Activated CD4-positive, alpha-beta T cell treated with anti-CD3 and anti-CD28 coated beads for 36 hours (primary cell): ENCODE measurements at regions of chr6 and their contacts with region 1.

Region 1: DNA sequence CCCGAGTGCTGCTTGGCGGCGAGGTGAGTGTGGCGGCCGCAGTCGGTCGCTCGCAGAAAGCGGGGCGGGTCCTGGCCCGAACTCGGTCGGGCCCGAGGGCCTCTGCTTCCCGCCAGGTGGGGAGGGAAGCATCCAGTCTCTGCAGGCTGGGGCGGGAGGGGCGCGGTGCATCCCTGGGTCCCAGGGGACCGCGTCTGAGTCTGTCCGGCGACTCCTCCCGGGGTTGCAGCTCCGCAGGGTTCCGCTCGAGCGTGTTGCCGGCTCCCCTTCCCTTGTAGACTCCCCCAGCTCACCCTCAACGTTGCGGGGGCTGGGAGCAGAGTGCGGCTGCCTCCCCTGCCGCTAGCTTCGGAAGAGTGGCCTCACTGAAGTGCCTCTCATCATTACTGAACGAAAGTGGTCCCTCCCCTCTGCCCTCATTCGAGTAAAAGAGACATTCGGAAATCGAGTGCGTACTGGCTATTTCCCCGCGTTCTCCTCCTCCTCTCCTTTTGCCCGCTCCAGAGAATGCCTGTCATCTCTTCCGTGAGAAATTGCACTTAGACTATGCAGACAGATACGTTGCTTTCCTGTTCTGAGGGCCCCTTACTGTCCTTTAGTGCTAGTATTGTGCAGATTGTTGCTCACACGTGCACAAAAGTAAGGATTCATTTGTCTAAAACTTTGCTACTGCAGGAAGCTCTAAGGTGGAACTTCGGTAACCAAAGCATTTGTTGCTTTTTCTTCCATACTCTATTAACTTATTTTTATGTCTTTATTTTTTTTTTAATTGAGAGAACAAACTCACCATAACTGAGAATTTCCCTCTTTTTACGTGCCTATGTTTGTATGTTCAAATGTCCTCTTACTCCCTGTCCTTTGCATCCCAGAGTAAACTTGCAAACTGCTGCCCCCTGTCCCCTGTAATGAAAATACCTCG is 751 bp downstream of the MAP3K4 start:
- DNase-seq: peak; percentile 45
- ATAC-seq: peak; percentile 61
- H3K4me3 Mint-ChIP-seq: peak overlapping the region; percentile 93
- H3K27ac Mint-ChIP-seq: peak overlapping the region; percentile 83
- H3K4me1 Mint-ChIP-seq: peaks cover 37% of the 10 kb centered on the region
- H3K27me3 Mint-ChIP-seq: no peaks in the 10 kb centered on the region

Region 2: DNA sequence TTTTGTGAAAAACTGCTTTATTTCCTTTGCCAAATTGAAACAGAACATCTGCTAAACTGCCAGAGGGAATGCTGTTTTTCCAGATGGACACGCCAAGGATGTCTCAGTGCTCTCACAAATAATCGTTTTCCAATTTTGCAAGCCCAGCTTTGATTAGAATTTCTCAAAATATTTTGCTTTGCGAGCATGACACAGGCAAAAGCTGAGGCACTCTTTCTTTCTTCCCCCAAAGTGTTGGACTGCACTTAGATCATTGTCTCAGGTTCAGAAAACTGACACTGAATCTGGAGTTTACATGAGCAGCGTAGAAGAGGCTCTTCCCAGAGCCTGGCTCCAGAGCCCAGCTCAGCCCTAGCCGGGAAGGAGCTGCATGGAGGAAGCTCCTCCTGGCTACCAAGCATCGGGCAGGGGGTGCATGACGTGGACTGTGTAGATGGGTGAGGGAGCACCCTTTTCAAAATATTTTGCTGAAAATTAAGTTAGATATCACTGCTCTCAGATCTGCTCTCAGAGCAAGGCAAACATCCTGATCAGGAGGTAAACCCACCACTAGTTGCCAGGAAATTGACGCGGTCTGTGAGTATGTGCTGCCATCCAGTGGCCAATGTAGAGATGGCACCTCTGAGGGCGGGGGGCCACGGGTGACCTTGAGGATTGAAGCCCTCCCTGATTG is 536.6 kb before region 1 on chr6:
- CTCF ChIA-PET with region 1: no interaction called
- POLR2A ChIA-PET with region 1: no interaction called
- intact Hi-C with region 1: no loop called
- DNase-seq: peak; percentile 76
- ATAC-seq: peak; percentile 87
- H3K4me3 Mint-ChIP-seq: no peak overlapping the region
- H3K27ac Mint-ChIP-seq: no peak overlapping the region
- H3K4me1 Mint-ChIP-seq: peaks cover 25% of the 10 kb centered on the region
- H3K27me3 Mint-ChIP-seq: peaks cover 16% of the 10 kb centered on the region

Region 3: DNA sequence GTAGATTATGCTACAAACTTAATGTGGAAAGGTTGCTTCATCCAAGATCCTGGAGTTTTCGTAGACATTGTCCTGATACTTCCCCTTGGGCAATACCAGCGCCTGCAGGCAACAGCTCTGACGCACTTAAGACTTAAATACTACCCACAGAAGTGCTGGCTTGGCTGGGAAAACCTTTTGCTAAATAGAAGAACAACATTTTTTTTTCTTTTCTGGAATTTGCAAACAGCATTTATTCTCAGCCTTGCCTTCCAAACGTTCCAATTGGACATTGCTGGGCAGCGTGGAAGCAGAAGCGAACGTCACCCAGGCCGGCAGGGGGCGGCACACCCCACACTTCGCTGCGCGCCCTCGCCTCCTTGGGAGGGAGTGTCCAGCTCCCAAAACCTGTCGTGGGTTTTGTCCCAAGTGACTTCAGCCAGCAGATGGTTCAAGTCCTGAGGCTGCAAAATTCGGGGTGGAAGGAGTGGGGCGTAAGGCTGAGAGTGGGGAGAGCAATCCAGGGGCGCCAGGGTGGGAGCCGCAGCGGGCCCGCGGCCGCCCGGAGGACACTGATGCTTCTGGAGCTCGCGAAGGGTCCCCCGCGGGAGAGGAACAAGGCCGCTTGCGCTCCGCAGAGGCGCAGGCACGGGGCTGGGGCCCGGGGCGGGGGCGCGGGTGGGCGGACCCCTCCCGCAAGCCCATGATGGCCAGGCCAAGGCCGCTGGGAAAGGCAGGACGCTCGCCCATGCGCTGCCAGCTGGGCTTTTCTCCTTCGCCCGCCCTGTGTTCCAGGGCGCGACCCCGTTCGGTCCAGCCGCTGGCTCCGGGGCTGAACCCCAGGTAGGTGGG is 61.6 kb before region 1 on chr6:
- CTCF ChIA-PET with region 1: interaction called, 7 read pairs
- POLR2A ChIA-PET with region 1: no interaction called
- intact Hi-C with region 1: loop called (anchors 1 to 5 kb)
- DNase-seq: peak; percentile 77
- ATAC-seq: peak; percentile 81
- H3K4me3 Mint-ChIP-seq: peak overlapping the region; percentile 34
- H3K27ac Mint-ChIP-seq: no peak overlapping the region
- H3K4me1 Mint-ChIP-seq: peaks cover 2% of the 10 kb centered on the region
- H3K27me3 Mint-ChIP-seq: peaks cover 37% of the 10 kb centered on the region

Region 4: GRCh38 chr6:160950507-160950906 is 41.8 kb before region 1 on chr6:
- CTCF ChIA-PET with region 1: no interaction called
- POLR2A ChIA-PET with region 1: no interaction called
- intact Hi-C with region 1: no loop called
- DNase-seq: no peak
- ATAC-seq: no peak
- H3K4me3 Mint-ChIP-seq: no peak overlapping the region
- H3K27ac Mint-ChIP-seq: no peak overlapping the region
- H3K4me1 Mint-ChIP-seq: no peaks in the 10 kb centered on the region
- H3K27me3 Mint-ChIP-seq: peaks cover 29% of the 10 kb centered on the region

Region 5: GRCh38 chr6:161079566-161080262 is 87.4 kb after region 1 on chr6:
- CTCF ChIA-PET with region 1: no interaction called
- POLR2A ChIA-PET with region 1: no interaction called
- intact Hi-C with region 1: loop called (anchors 1 to 10 kb)
- DNase-seq: peak; percentile 84
- ATAC-seq: peak; percentile 91
- H3K4me3 Mint-ChIP-seq: peak overlapping the region; percentile 29
- H3K27ac Mint-ChIP-seq: no peak overlapping the region
- H3K4me1 Mint-ChIP-seq: peaks cover 6% of the 10 kb centered on the region
- H3K27me3 Mint-ChIP-seq: no peaks in the 10 kb centered on the region

Region 6: DNA sequence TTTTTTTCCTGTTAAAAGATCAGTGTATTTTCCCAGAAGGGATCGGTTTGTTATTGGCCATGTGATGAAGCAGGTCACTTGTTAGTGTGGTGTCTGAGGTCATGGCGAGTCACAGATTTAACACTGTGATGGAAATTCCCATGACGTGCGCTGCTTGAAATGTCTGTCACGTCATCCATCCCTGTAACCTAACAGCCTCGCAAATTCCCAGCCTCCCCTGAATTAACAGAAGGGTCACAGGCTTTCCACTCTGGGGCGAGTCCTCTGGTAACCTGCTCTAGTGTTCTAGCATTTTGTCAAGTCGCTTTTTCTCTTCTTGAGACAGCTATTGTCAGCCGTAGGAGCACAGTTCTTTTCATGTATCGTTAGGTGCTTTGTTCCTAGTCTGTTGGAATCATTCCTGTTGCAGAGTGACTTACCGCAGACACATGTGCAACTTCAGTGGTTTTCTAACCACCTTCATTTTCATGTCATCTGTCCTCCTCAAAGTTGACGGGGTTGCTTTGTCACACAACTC is 136.4 kb after region 1 on chr6:
- CTCF ChIA-PET with region 1: no interaction called
- POLR2A ChIA-PET with region 1: no interaction called
- intact Hi-C with region 1: loop called in 1 of 2 experiments (anchors 2 kb)
- DNase-seq: peak; percentile 76
- ATAC-seq: peak; percentile 77
- H3K4me3 Mint-ChIP-seq: peak overlapping the region; percentile 50
- H3K27ac Mint-ChIP-seq: peak overlapping the region; percentile 89
- H3K4me1 Mint-ChIP-seq: peaks cover 34% of the 10 kb centered on the region
- H3K27me3 Mint-ChIP-seq: no peaks in the 10 kb centered on the region

Region 7: GRCh38 chr6:161273752-161274487 is 281.6 kb after region 1 on chr6 and contains the start of gene AGPAT4:
- CTCF ChIA-PET with region 1: interaction called, 3 read pairs
- POLR2A ChIA-PET with region 1: interaction called, 3 read pairs
- intact Hi-C with region 1: loop called (anchors 1 to 5 kb)
- DNase-seq: peak; percentile 71
- ATAC-seq: peak; percentile 98
- H3K4me3 Mint-ChIP-seq: peak within 1 kb of the TSS; percentile 70
- H3K27ac Mint-ChIP-seq: peak within 1 kb of the TSS; percentile 86
- H3K4me1 Mint-ChIP-seq: peaks cover 23% of the 10 kb centered on the region
- H3K27me3 Mint-ChIP-seq: peaks cover 6% of the 10 kb centered on the region
- total RNA-seq, gene AGPAT4: 4.7 to 5.0 TPM

Region 8: GRCh38 chr6:162727309-162728182 is 1735.2 kb after region 1 on chr6 and contains the starts of genes PACRG and PRKN:
- CTCF ChIA-PET with region 1: no interaction called
- POLR2A ChIA-PET with region 1: no interaction called
- intact Hi-C with region 1: loop called in 1 of 2 experiments (anchors 1 kb)
- DNase-seq: peak; percentile 99
- ATAC-seq: peak; percentile 97
- H3K4me3 Mint-ChIP-seq: peak within 1 kb of the TSS; percentile 77
- H3K27ac Mint-ChIP-seq: peak within 1 kb of the TSS; percentile 84
- H3K4me1 Mint-ChIP-seq: peaks cover 11% of the 10 kb centered on the region
- H3K27me3 Mint-ChIP-seq: no peaks in the 10 kb centered on the region
- total RNA-seq, gene PACRG: not detected
- total RNA-seq, gene PRKN: 0.56 to 0.87 TPM